Activated CD4-positive, alpha-beta T cell treated with anti-CD3 and anti-CD28 coated beads for 36 hours (primary cell): ENCODE measurements at regions of chr7 and their contacts with region 1.

Region 1: DNA sequence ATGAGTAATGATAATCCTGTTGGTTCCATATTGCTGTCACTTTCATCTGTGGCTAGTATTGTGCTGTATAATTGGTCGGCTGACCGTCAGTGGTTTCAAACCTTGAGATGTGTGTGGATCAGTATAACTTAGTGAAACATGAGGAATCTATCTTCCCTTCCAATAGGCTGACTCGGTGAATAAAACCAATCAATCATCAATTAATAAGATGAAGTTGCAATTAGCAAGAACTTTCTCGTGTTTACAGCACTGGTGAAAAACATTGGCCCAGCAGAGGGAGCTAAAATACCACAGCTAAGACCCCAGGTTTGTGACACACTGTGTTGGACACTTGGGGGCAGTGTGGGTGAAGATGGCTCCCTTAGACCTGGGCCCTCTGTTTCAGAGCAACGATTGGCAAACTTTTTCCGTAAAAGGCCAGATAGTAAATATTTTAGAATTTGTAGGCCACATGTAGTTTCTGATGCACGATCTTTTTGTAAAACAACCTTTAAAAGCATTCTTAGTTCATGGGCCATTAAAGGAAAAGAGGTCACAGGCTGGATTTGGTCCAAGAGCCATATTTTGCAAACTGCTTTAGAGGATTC is 47.8 kb downstream of the STRA8 start:
- DNase-seq: peak; percentile 89
- ATAC-seq: peak; percentile 99
- H3K4me3 Mint-ChIP-seq: no peak overlapping the region
- H3K27ac Mint-ChIP-seq: no peak overlapping the region
- H3K4me1 Mint-ChIP-seq: peaks cover 15% of the 10 kb centered on the region
- H3K27me3 Mint-ChIP-seq: peaks cover 9% of the 10 kb centered on the region

Region 2: DNA sequence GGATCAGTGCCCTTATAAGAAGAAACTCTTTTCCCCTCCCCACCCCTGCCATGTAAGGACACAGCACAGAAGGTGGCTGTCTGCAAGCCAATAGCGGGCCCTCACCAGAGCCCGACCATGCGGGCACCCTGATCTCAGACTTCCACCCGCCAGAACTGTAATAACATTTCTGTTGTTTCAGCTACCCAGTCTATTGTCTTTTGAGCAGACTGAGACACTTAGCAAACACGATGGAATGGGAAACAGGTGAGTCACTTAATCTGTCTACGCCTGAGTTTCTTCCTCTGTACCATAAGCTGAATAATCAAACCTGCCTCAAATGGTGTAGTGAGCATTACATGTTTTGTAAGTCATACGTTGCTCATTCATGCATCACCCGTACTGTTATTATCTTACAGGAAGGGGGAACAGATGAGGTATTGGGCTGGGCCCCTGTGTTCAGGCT is 10.4 kb after region 1 on chr7:
- CTCF ChIA-PET with region 1: interaction called, 19 read pairs
- POLR2A ChIA-PET with region 1: no interaction called
- intact Hi-C with region 1: no loop called
- DNase-seq: peak; percentile 39
- ATAC-seq: peak; percentile 96
- H3K4me3 Mint-ChIP-seq: no peak overlapping the region
- H3K27ac Mint-ChIP-seq: no peak overlapping the region
- H3K4me1 Mint-ChIP-seq: peaks cover 7% of the 10 kb centered on the region
- H3K27me3 Mint-ChIP-seq: peaks cover 8% of the 10 kb centered on the region

Region 3: GRCh38 chr7:135335628-135336139 is 54.2 kb after region 1 on chr7:
- CTCF ChIA-PET with region 1: interaction called, 81 read pairs
- POLR2A ChIA-PET with region 1: no interaction called
- intact Hi-C with region 1: loop called (anchors 1 kb)
- DNase-seq: peak; percentile 73
- ATAC-seq: peak; percentile 79
- H3K4me3 Mint-ChIP-seq: no peak overlapping the region
- H3K27ac Mint-ChIP-seq: no peak overlapping the region
- H3K4me1 Mint-ChIP-seq: peaks cover 5% of the 10 kb centered on the region
- H3K27me3 Mint-ChIP-seq: no peaks in the 10 kb centered on the region

Region 4: GRCh38 chr7:135414850-135415439 is 133.5 kb after region 1 on chr7:
- CTCF ChIA-PET with region 1: interaction called, 3 read pairs
- POLR2A ChIA-PET with region 1: no interaction called
- intact Hi-C with region 1: loop called in 1 of 2 experiments (anchors 5 kb)
- DNase-seq: peak; percentile 49
- ATAC-seq: peak; percentile 30
- H3K4me3 Mint-ChIP-seq: no peak overlapping the region
- H3K27ac Mint-ChIP-seq: no peak overlapping the region
- H3K4me1 Mint-ChIP-seq: peaks cover 5% of the 10 kb centered on the region
- H3K27me3 Mint-ChIP-seq: no peaks in the 10 kb centered on the region

Region 5: DNA sequence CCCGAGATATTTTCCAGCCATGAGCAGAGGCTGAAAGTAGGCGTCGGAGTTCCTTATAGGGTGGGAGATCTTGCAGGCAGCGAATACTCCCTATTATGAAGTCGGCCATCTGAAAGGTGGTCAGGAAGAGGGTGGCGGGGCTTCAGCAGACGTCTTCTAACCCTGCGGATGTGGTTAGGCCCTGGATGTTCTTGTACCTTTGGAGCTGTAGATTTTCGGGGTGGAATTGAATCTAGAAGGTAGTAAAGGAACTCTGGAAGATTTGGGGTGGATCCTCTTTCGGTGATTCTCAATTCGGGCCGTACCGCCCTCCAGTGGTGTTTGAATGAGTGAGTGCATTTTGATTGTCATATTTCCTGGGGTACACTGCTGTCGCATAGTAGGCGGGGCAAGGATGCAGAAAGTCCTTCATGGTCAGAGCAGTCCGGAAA is 276.9 kb after region 1 on chr7:
- CTCF ChIA-PET with region 1: no interaction called
- POLR2A ChIA-PET with region 1: no interaction called
- intact Hi-C with region 1: loop called (anchors 1 kb)
- DNase-seq: peak; percentile 78
- ATAC-seq: peak; percentile 73
- H3K4me3 Mint-ChIP-seq: no peak overlapping the region
- H3K27ac Mint-ChIP-seq: no peak overlapping the region
- H3K4me1 Mint-ChIP-seq: peaks cover 29% of the 10 kb centered on the region
- H3K27me3 Mint-ChIP-seq: no peaks in the 10 kb centered on the region

Region 6: GRCh38 chr7:135645296-135645904 is 363.9 kb after region 1 on chr7:
- CTCF ChIA-PET with region 1: interaction called, 37 read pairs
- POLR2A ChIA-PET with region 1: no interaction called
- intact Hi-C with region 1: loop called (anchors 1 kb)
- DNase-seq: no peak
- ATAC-seq: peak; percentile 58
- H3K4me3 Mint-ChIP-seq: no peak overlapping the region
- H3K27ac Mint-ChIP-seq: no peak overlapping the region
- H3K4me1 Mint-ChIP-seq: no peaks in the 10 kb centered on the region
- H3K27me3 Mint-ChIP-seq: no peaks in the 10 kb centered on the region

Region 7: DNA sequence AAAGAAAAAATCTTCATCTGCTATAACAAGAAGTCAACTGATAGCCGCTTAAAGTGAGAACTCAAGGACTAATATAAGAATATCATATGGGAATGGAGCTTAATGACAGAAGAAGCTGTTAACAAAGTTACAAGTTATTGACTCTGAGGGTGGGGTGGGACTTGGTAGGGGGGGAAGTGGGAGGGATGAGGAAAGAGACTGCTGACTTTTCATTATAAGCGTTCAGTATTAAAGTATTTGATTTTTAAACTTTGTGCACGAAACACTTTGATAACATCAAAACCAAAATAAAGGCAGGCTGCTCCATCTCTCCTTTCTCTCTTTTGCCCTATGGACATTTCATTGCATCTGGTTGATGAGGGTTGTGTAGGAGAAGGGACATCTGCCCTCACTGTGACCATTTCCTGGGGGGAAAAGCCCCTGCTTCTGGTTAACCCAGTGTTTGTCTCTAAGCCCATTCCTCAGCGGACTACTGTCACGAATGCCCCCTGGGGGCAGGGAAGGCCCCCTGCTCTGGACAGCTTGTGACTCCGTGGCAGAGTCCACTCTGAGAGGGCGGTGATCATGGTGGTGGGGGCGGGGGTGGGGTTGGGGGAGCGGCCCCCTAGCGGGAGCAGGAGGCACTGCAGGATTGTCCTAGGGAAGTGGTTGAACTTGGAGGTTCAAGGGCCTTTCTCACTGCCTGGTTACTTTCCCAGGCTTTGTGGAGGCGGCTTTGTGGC is 429.1 kb after region 1 on chr7:
- CTCF ChIA-PET with region 1: no interaction called
- POLR2A ChIA-PET with region 1: no interaction called
- intact Hi-C with region 1: loop called in 1 of 2 experiments (anchors 2 kb)
- DNase-seq: peak; percentile 30
- ATAC-seq: no peak
- H3K4me3 Mint-ChIP-seq: no peak overlapping the region
- H3K27ac Mint-ChIP-seq: no peak overlapping the region
- H3K4me1 Mint-ChIP-seq: no peaks in the 10 kb centered on the region
- H3K27me3 Mint-ChIP-seq: no peaks in the 10 kb centered on the region